Panc1 (cell line): ENCODE measurements at regions of chr1 and their contacts with region 1.

Region 1: GRCh38 chr1:7076572-7076971 is 291.3 kb downstream of the CAMTA1 start:
- DNase-seq: no peak
- ATAC-seq: no peak
- H3K4me3 ChIP-seq: no peak overlapping the region
- H3K27ac ChIP-seq: no peak overlapping the region
- H3K4me1 ChIP-seq: no peaks in the 10 kb centered on the region
- H3K27me3 ChIP-seq: peaks cover 16% of the 10 kb centered on the region
- CTCF ChIP-seq: no peak

Region 2: DNA sequence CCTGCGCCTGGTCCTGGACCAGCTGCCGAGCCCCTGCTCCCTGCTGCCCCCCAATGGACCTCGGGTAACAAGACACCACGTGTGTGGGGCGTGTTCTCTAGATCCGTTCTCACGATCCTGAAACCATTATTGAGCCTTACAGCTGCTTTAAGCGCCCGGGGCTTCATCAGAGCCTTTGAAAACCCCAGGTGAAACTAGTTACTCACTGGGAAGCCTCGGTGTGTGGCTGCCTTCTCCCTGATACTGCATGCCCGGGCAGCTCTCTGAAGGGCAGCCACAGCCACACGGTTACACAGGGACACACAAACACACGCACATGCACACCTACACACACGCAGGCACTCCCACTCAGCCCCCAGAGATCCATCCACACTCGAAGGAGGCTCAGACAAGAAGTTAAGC is 662.1 kb before region 1 on chr1:
- CTCF ChIA-PET with region 1: no interaction called
- POLR2A ChIA-PET with region 1: no interaction called
- in situ Hi-C with region 1: no loop called
- intact Hi-C with region 1: no loop called
- DNase-seq: no peak
- ATAC-seq: peak; percentile 80
- H3K4me3 ChIP-seq: peak overlapping the region in 1 of 2 experiments; percentile 28; a peak in 2 of 4 replicates
- H3K27ac ChIP-seq: 0 out of 2 replicates have a peak overlapping the region, but pooled peaks have one; percentile 8
- H3K4me1 ChIP-seq: peaks cover 17% of the 10 kb centered on the region
- H3K27me3 ChIP-seq: no peaks in the 10 kb centered on the region
- CTCF ChIP-seq: peak; percentile 93

Region 3: DNA sequence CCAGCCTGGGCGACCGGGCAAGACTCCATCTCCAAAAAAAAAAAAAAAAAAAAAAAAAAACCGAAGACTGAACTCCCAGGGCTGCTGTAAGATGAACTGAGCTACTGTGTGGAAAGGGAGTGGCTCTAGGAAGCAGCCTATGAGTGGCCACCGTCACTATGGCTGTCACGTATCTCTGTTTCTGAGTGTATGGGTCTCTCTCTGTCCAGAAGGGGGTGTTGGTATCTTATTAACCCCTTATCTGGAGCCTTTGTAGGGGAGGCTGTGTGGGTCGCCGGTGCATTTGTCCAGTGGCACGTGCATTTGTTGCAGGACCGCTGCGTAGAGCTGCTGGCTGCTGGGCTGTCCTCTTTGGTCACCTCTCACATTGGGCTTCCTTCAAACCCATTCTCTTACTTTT is 35.3 kb after region 1 on chr1:
- CTCF ChIA-PET with region 1: interaction called, 16 read pairs
- POLR2A ChIA-PET with region 1: no interaction called
- in situ Hi-C with region 1: no loop called
- intact Hi-C with region 1: no loop called
- DNase-seq: no peak
- ATAC-seq: no peak
- H3K4me3 ChIP-seq: no peak overlapping the region
- H3K27ac ChIP-seq: no peak overlapping the region
- H3K4me1 ChIP-seq: no peaks in the 10 kb centered on the region
- H3K27me3 ChIP-seq: no peaks in the 10 kb centered on the region; the same call in 1 of the 2 replicates
- CTCF ChIP-seq: no peak